ENCODE measurements at regions of chr2 and their contacts with region 1.

Region 1: DNA sequence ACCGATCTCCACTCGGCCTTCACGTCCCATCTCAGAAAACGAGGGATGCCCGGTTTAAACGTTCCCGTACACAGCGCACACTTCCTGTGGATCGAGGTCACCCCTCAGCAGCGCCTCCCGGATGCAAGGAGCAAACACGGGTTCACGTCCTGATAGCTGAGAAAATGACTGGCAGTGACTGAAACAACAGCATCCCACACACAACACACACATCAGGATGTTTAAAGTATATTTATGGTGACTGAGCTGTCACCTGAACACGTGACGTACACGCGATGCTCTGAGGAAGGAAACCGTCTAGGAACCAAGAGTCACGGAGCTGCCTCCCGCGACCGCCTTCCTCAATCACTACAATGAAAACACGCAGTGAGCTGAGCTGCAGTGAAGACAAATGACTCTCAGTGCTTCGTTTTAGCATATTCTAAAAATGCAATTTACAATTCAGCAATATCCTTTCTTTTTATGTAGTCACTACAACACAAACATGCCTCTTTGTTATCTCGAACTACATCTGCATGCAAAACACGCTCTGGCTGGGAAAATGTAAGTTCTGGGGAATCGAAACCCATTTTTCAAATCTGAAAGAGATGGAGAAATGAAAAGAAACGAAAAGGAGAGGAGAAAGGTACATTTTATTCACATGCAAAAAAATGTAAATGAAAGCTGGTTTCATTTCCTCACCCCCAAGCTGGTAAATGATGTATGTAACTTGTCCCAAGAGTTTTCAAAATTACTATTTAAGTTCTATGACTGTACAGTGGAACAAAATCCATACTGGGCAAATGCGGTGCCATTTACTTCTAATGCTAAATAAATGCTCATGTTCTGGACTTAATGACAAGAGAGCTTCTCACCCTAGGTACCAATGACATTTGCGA is 19.8 kb downstream of the HDAC4 start:
- DNase-seq: peak; percentile 74
- ATAC-seq: peak; percentile 83
- H3K4me3 Mint-ChIP-seq: peak overlapping the region; percentile 73
- H3K27ac Mint-ChIP-seq: peak overlapping the region; percentile 79
- H3K4me1 Mint-ChIP-seq: peaks cover 21% of the 10 kb centered on the region
- H3K27me3 Mint-ChIP-seq: no peaks in the 10 kb centered on the region

Region 2: GRCh38 chr2:238895891-238896600 is 485.0 kb before region 1 on chr2:
- CTCF ChIA-PET with region 1: no interaction called
- POLR2A ChIA-PET with region 1: no interaction called
- DNase-seq: no peak
- ATAC-seq: no peak
- H3K4me3 Mint-ChIP-seq: no peak overlapping the region
- H3K27ac Mint-ChIP-seq: no peak overlapping the region
- H3K4me1 Mint-ChIP-seq: no peaks in the 10 kb centered on the region
- H3K27me3 Mint-ChIP-seq: no peaks in the 10 kb centered on the region

Region 3: DNA sequence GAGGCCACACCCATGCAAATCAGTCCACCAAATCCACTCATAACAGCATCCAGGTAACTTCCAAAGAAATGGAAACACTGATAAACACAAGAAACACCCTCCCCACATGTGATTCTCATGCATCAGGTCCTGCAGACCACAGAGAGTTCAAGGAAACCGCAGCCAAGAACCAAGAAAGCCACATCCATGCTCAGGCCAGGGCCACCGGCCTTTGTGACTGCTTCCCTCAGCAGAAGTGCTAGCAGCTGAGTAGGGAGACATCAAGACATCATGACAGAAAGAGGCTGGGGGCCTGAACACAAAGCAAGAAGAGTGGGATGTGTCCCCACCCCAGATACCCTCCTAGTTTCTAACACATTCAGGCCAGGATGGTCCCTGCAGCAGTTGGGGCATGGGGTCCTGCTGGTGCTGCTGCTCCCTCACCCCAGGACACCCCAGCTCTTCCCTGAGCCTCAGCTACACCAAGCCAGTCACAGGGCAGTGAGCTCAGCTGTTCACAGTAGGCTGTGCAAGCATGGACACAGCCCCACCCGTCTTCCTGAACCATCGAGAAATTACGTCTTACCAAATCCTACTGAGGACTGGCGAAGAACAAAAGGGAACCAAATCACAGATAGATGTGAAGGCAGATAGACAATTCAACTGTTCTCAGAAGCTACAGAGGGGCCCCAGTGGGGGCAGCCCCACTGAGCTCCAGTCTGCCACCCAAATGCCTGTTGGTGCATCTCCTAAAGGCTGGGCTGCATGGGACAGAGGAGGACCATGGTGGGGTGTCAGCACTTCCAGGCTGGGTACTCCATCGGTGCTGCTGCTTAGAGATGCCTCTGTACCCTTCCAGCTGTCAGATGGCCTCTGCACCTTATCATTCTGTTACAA is 41.1 kb before region 1 on chr2:
- CTCF ChIA-PET with region 1: no interaction called
- POLR2A ChIA-PET with region 1: no interaction called
- DNase-seq: peak; percentile 80
- ATAC-seq: peak; percentile 82
- H3K4me3 Mint-ChIP-seq: peak overlapping the region; percentile 44
- H3K27ac Mint-ChIP-seq: peak overlapping the region; percentile 37
- H3K4me1 Mint-ChIP-seq: peaks cover 35% of the 10 kb centered on the region
- H3K27me3 Mint-ChIP-seq: peaks cover 10% of the 10 kb centered on the region

Region 4: DNA sequence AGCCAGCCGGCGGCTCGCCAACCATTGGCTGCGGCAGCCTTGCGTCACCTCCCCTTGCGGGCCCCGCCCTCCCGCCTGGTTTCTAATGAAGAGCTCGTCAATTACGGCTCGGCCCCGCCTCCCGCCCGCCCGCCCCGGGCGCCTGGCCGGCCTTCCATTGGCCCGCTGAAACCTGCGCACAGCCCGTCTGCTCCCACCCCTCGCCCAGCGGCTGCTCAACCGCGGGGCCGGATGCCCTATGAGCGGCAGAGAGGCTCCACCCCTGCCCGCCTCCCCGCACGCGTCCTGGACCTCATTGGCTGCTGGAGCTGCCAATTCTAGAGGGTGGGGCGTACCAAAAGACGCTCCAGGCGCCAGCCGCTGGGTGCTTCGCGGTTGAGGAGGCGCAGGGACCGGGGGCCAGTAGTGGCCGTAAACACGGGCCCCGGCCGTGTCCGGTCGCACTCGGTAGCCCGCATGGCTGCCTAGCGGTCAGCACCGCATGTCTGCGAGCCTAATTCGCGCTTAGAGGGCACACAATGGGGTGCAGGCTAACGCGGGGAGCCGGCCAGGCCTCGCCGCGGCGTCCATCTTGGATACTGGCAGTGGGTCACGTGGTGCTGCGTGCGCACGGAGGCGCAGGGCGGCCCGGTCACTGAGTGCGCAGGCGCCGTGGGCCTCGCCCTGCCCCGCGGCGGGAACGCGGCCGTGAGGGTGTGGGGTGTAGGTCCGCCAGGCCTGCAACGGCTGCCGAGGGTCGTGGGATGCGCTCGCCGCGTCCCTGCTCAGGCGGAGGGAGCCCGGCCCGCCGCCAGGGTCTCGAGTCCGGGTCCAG is 20.2 kb after region 1 on chr2:
- CTCF ChIA-PET with region 1: interaction called, 7 read pairs
- POLR2A ChIA-PET with region 1: interaction called, 10 read pairs
- DNase-seq: peak; percentile 99
- ATAC-seq: peak; percentile 93
- H3K4me3 Mint-ChIP-seq: peak overlapping the region; percentile 91
- H3K27ac Mint-ChIP-seq: peak overlapping the region; percentile 96
- H3K4me1 Mint-ChIP-seq: peaks cover 40% of the 10 kb centered on the region
- H3K27me3 Mint-ChIP-seq: peaks cover 11% of the 10 kb centered on the region